Common myeloid progenitor, CD34-positive (primary cell): ENCODE measurements at regions of chr19 and their contacts with region 1.

Region 1: DNA sequence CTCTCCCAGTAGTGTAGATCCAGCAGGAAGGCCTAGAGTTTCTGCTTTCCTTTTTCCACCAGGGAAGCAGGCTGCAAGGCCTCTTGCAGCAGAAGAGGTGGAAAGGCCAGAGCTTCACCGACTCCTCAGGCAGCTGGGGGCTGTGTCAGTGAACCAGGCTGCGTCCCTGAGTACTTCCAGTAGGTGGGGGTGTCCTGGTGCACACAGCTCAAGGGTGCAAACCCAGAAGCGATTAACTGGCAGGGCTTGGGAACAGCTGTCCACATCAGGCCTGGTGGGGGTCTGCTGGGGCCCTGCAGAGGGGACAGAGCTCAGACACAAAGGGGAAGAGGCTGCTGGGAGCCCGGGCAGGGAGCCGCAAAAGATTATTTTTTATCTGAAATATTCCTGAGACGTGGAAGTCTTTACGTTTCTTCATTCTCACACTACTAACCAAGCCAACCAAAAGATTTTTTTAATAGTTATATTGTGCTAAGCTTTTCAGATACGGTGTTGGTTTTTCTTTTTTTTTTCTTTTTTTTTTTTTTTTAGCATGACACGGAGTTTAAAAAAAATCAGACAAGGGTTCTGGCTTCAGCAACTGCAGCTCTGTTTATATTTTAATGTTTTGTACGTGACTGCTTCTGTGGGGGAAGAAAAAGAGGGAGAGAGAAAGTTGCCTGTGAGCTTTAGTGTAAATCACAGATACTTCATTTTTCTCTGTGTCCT is 11.0 kb downstream of the TSHZ3 start:
- DNase-seq: peak; percentile 59 to 81 (median 77)
- H3K4me3 ChIP-seq: no peak overlapping the region
- H3K27ac ChIP-seq: no peak overlapping the region
- H3K4me1 ChIP-seq: peaks cover 9 to 38% (median 34%) of the 10 kb centered on the region in 4 experiments
- H3K27me3 ChIP-seq: peaks cover 0 to 7% (median 0%) of the 10 kb centered on the region in 5 experiments

Region 2: GRCh38 chr19:31350701-31351068 is 12.5 kb after region 1 on chr19:
- CTCF ChIA-PET with region 1: interaction called, 23 read pairs
- POLR2A ChIA-PET with region 1: interaction called, 4 read pairs
- DNase-seq: peak in 2 of 3 donors; percentile 31 to 48
- H3K4me3 ChIP-seq: peak overlapping the region; percentile 25 to 77 (median 63)
- H3K27ac ChIP-seq: no peak overlapping the region
- H3K4me1 ChIP-seq: peaks cover 0 to 42% (median 25%) of the 10 kb centered on the region in 4 experiments
- H3K27me3 ChIP-seq: peaks cover 19 to 81% (median 51%) of the 10 kb centered on the region in 5 experiments